GM10248 (cell line): ENCODE measurements at regions of chr3 and their contacts with region 1.

Region 1: DNA sequence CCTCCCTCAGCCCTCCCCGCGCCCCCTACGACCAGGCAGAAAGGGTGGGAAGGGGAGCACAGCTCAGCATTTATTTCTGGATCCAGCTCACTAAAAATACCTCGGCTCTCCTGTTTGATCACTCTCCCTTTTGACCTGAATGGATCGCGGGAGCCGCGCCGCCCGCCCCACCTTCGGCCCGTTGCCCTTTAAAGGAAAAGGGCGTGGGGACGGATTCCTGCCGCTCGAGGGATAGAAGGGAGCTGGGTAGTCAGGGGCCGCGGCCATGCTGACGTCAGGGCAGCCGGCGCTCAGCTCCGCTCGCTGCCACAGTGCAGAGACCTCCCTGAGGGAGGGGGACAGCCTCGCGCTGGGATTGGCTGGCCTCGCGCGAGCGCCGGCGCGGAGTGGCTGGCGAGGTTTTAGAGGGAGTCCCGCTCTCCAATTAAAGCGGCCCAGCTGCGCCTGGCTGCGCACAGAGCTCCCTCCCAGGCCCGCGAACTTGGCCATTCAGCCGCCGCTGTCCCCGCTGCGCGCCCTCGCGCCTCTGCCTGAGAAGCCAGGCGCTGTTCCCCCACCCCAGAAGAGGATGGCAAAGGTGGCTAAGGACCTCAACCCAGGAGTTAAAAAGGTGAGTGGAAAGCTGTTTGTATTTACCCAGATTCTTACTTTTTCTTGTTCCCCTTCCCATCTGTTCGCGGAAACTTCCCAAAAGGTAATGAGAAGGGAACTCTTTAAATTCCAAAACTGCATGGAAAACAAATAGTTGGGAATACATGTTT is at the start of gene LMCD1:
- DNase-seq: peak; percentile 87
- CTCF ChIP-seq: no peak

Region 2: GRCh38 chr3:8512234-8512633 is 10.7 kb after region 1 on chr3:
- CTCF ChIA-PET with region 1: interaction called, 17 read pairs
- POLR2A ChIA-PET with region 1: no interaction called
- DNase-seq: no peak
- CTCF ChIP-seq: no peak